ENCODE measurements at regions of chr10 and their contacts with region 1.

Region 1: GRCh38 chr10:62231371-62231770 is 37.3 kb downstream of the RTKN2 start:
- DNase-seq: no peak
- ATAC-seq: no peak
- H3K4me3 ChIP-seq: no peak overlapping the region
- H3K27ac ChIP-seq: no peak overlapping the region
- H3K4me1 ChIP-seq: no peaks in the 10 kb centered on the region
- H3K27me3 ChIP-seq: no peaks in the 10 kb centered on the region
- CTCF ChIP-seq: no peak
- POLR2A ChIP-seq: no peak

Region 2: DNA sequence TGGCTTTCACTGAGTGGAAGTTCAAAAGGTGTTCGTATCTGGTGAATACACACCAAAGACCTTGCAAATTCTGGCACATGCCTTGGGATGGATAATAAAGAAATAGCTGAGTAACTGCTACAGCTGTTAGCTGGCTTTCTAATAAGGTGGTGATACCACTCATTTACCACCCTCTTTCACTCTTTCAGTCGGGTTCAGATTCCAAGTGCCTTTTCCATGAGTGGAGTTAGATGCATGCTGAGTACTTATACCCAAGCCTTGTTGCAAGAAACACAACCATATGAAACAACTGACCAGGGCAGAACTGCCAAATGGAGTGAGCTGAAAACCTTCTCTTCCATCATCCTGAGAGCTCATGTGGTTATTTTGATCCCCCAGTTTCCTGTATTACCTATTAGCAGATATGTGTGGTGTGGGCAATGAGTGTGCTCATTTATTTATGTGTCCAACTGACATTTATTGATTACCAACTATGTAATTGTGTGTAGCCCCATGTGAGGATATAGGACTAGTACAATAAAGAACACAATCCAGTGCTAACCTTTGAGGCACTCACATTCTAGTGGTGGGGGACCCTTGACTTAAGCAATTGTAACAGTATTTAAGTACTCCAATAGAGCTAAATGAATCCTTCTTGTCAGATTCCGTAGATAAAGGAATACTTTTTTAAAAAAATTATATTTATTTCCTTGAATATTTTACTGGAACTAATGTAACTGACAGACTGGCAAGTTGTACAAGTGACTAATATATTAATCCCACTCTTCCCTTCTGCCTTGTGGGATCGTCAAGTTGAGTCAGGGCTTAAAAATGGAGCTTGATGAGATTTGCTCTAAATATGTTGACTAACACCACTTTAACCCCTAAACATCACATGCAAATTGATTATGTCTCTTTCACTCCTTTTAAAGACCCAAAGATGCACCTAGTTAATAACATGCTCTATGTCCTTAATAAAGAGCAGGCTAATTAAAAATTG is 205.2 kb before region 1 on chr10:
- in situ Hi-C with region 1: loop called in 1 of 4 experiments (anchors 10 kb)
- intact Hi-C with region 1: no loop called
- DNase-seq: no peak
- ATAC-seq: no peak
- H3K4me3 ChIP-seq: no peak overlapping the region
- H3K27ac ChIP-seq: no peak overlapping the region
- H3K4me1 ChIP-seq: peaks cover 0 to 3% of the 10 kb centered on the region in 2 donors
- H3K27me3 ChIP-seq: no peaks in the 10 kb centered on the region
- CTCF ChIP-seq: no peak
- POLR2A ChIP-seq: no peak

Region 3: GRCh38 chr10:62109587-62110293 is 121.6 kb before region 1 on chr10:
- in situ Hi-C with region 1: loop called in 2 of 4 experiments (anchors 10 to 25 kb)
- intact Hi-C with region 1: no loop called
- DNase-seq: no peak
- ATAC-seq: no peak
- H3K4me3 ChIP-seq: no peak overlapping the region
- H3K27ac ChIP-seq: no peak overlapping the region
- H3K4me1 ChIP-seq: no peaks in the 10 kb centered on the region
- H3K27me3 ChIP-seq: no peaks in the 10 kb centered on the region
- CTCF ChIP-seq: no peak
- POLR2A ChIP-seq: no peak

Region 4: DNA sequence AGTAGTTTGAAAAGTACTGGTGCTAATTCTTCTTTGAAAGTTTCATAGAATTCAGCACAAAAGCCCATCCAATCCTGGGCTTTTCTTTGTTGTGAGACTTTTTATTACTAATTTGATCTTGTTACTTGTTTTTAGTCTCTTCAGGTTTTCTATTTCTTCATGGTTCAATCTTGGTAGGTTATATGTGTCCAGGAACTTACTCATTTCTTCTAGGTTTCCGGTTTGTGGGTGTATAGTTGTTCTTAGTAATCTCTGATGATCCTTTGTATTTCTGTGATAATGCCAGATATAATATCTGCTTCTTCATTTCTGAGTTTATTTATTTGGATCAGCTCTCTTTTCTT is 110.2 kb before region 1 on chr10:
- in situ Hi-C with region 1: loop called in 3 of 4 experiments (anchors 10 to 25 kb)
- intact Hi-C with region 1: no loop called
- DNase-seq: no peak
- ATAC-seq: no peak
- H3K4me3 ChIP-seq: no peak overlapping the region
- H3K27ac ChIP-seq: no peak overlapping the region
- H3K4me1 ChIP-seq: no peaks in the 10 kb centered on the region
- H3K27me3 ChIP-seq: no peaks in the 10 kb centered on the region
- CTCF ChIP-seq: no peak
- POLR2A ChIP-seq: no peak

Measured in gastrocnemius medialis (tissue), 4 donors.